Heart right ventricle (tissue), 16 donors: ENCODE measurements at regions of chr9 and their contacts with region 1.

Region 1: GRCh38 chr9:6383551-6384225 is 29.3 kb upstream of the UHRF2 start:
- DNase-seq: no peak
- ATAC-seq: no peak
- H3K4me3 ChIP-seq: no peak overlapping the region
- H3K27ac ChIP-seq: peak overlapping the region in 1 of 10 donors; percentile 26
- H3K4me1 ChIP-seq: no peaks in the 10 kb centered on the region
- H3K27me3 ChIP-seq: no peaks in the 10 kb centered on the region
- CTCF ChIP-seq: no peak

Region 2: DNA sequence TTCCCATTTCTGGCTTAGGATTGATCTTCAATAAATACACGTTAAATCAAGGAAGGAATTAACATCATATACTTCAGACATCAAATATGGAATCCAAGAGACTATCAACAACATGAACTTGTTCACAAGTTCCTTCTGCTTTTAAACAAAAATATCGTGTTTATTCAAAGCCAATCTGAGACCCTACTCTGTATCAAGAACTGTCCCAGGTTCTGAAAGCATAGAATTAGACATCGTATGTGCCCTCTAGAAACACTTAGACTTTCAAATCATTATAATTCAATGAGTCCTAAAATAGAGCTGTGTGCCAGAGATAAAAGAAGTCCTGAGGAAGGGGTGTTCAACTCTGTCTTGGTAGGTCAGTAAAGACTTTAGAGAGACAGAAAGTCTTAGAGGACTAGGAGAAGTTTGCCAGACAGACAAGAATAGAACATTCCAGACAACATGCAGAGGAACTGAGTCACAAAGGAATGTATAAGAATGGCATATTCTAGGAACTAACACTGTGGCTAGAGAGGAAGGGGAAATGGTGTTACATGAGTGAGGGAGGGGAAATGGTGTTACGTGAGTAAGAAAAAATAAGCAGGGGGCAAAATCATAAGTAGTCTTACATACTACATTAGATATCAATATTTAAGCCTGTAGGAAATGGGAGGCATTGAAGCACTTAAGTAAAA is 52.6 kb before region 1 on chr9:
- intact Hi-C with region 1: no loop called
- DNase-seq: no peak
- ATAC-seq: no peak
- H3K4me3 ChIP-seq: no peak overlapping the region
- H3K27ac ChIP-seq: no peak overlapping the region
- H3K4me1 ChIP-seq: no peaks in the 10 kb centered on the region
- H3K27me3 ChIP-seq: peaks cover 0 to 2% (median 0%) of the 10 kb centered on the region in 7 donors
- CTCF ChIP-seq: no peak

Region 3: DNA sequence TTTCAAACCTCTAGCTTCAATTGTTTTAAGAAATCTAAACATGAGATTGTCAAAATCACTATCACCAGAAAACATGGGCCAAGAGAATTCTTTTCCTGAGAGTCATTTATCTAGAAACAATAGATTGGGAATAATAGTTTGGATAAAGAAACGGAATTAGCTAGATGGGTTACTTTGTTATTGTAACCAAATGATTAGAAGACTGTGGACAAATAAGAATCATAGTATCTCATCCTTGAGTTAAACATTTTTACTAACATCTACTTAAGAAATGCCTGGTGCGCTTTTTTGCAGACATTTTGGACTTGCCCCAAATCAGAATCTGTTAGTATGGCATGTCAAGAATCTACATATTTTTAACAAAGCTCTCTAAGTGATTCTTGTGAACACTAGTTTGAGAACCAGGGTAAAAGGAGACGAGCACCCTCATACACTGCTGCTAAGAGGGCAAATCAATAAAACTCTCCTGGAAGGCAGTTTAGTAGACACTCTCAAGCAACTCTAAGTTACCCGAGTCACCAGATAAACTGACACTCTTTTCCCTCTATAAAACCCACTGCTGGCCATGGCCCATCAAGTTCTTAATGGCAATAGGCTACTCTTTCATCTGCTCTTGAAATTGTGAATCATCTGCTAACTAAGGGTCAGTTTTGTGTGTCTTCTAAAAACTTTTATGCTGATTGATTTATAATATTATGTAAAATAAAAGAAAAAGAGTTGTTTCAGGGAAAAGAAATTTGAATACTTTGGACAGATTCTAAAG is 16.4 kb before region 1 on chr9:
- intact Hi-C with region 1: loop called in 1 of 10 experiments (anchors 1 kb)
- DNase-seq: no peak
- ATAC-seq: no peak
- H3K4me3 ChIP-seq: no peak overlapping the region
- H3K27ac ChIP-seq: no peak overlapping the region
- H3K4me1 ChIP-seq: no peaks in the 10 kb centered on the region
- H3K27me3 ChIP-seq: peaks cover 0 to 3% (median 0%) of the 10 kb centered on the region in 7 donors
- CTCF ChIP-seq: no peak

Region 4: DNA sequence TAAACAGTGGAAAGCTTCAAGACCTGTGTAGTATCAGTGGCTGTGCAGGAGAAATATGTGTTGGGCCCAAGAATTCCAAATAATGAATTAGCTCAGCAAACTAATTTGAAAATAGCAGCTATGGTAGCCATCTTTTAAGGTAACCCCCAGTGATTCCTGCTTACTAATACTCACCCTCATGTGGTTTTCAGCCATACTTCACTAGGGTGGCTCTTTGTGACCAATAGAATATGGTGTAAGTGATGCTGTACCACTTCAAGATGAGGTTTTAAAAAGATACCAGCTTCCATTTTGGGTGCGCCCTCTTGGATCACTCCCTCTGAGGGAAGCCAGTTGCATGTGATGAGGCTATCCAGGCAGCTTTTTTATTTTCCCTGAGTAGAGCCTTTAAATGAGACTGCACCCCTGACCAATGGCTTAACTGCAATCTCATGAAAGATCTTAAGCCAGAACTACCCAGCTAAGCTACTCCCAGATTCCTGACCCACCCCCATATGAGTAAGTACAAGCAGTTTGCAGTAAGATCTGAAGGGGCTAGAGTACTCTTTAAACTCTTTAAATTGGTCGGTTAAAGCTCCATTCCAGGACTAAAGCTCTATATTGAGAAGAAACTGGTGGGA is 87.7 kb after region 1 on chr9:
- intact Hi-C with region 1: no loop called
- DNase-seq: no peak
- ATAC-seq: no peak
- H3K4me3 ChIP-seq: no peak overlapping the region
- H3K27ac ChIP-seq: no peak overlapping the region
- H3K4me1 ChIP-seq: peaks cover 0 to 11% (median 0%) of the 10 kb centered on the region in 9 donors
- H3K27me3 ChIP-seq: no peaks in the 10 kb centered on the region
- CTCF ChIP-seq: no peak

Region 5: DNA sequence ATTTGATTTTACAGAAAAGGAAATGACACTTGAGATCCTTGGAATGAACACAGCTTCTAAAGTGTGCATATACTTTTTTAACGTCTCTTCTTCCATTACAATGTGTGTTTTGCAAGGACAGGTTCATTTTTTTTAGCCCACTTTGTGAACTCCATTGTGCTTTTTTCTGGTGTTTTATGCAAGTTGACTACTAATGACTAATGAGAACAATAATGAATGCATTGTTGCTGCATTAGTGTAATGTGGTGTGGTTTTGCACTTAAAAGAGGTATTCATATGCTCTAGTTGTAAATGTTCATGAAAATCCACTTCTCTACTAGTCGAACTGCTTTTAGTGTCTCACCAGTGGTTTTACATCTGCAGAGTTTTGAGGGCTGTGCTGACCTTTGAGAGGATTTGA is 122.9 kb after region 1 on chr9:
- intact Hi-C with region 1: no loop called
- DNase-seq: no peak
- ATAC-seq: no peak
- H3K4me3 ChIP-seq: no peak overlapping the region
- H3K27ac ChIP-seq: no peak overlapping the region
- H3K4me1 ChIP-seq: no peaks in the 10 kb centered on the region
- H3K27me3 ChIP-seq: no peaks in the 10 kb centered on the region
- CTCF ChIP-seq: no peak